H1 (cell line): ENCODE measurements at regions of chr10 and their contacts with region 1.

Region 1: DNA sequence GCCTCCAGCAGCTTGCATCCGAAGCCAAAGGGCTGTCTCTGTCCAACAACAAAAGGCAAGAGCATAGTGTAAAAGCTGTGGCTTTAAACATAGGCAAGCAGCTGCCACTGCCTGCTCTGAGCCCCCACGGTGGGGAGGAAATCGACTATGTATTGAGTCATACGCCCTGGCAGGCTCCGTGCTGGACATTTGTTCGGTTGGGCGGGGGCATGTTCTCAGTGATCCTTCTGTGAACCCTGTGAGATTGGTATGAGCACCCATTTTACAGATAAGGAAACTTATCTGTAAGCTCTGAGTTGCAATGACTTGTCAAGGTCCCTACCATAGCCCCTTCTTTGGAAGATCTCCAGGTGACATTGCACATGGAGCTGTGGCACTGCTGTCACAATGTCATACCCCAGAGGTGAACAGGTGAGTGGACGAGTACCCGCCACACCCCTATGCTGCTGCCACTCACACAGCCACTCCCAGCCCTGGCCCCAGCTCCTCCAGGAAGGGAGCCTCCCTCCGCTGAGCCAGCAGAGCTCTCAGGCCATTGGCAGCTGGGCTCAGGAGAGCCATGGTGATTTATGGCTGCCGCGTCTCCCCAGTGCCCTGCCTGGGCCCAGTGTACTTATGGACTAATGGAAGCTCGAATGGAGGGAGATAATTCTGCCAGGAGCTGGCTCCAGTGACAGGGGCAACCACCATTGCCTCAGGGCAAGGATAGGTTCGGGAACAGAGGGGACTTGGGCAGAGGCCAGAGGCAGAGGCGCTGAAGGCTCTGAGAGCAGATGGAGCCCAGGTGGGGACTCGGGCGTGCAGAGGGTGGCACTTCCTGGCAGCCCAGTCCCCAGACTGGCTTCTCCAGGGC is 43.7 kb downstream of the UNC5B start:
- DNase-seq: no peak
- H3K4me3 ChIP-seq: no peak overlapping the region
- H3K27ac ChIP-seq: no peak overlapping the region
- H3K4me1 ChIP-seq: peaks cover 17 to 41% (median 33%) of the 10 kb centered on the region in 4 experiments
- H3K27me3 ChIP-seq: no peaks in the 10 kb centered on the region
- CTCF ChIP-seq: no peak
- EP300 ChIP-seq: no peak
- POLR2A ChIP-seq: no peak
- RAD21 ChIP-seq: no peak

Region 2: DNA sequence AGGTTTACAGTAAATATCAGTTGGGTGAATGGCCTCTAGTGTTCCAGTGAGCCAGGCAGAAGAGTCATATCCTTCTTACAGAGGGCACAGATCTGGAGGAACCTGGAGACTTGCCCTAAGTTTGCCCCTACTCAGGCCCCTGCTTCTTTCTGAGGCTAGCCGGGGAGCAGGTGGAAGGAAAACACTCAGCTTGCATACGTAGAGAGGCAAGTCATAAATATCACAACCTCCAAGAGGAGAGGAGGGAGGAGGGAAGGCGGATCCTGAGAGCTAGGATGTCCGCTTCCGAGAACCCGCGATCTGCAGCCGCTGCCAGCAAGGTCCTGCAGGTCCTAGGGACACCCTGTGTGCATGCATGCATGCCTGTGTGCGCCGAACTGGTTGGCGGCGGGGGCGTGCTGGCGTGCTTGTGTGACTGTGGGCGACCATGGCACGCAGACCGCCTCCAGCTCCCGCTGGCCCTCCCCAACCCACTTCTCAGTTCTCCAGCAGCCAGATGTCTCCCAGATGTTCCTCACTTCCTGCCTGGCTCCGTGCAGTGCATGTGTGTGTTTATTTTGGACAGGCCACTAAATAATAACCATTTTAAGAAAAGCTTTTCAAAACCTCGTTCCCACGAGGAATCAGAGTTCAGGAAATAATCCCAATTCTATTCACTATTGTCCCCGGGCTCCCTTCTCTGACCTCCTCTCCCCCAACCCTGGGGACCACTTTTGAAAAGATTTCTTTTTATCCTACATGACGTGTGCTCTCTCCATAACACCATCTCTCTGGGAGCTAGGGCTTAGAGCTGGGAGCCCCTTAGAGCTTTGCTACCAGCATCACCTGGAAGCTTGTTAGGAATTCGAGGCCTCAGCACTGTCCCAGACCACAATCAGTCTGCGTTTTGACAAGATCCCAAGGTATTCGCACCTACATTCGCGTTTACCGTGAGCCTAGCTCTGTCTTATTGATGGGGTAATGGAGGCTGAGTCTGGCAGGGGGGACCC is 11.3 kb before region 1 on chr10:
- CTCF ChIA-PET with region 1: interaction called, 21 read pairs
- POLR2A ChIA-PET with region 1: interaction called, 4 read pairs
- DNase-seq: no peak
- H3K4me3 ChIP-seq: no peak overlapping the region
- H3K27ac ChIP-seq: no peak overlapping the region
- H3K4me1 ChIP-seq: peaks cover 0 to 1% (median 0%) of the 10 kb centered on the region in 4 experiments; a peak in 2 of 7 replicates
- H3K27me3 ChIP-seq: no peaks in the 10 kb centered on the region; a peak in 1 of 7 replicates
- CTCF ChIP-seq: no peak
- EP300 ChIP-seq: no peak
- POLR2A ChIP-seq: no peak
- RAD21 ChIP-seq: no peak

Region 3: DNA sequence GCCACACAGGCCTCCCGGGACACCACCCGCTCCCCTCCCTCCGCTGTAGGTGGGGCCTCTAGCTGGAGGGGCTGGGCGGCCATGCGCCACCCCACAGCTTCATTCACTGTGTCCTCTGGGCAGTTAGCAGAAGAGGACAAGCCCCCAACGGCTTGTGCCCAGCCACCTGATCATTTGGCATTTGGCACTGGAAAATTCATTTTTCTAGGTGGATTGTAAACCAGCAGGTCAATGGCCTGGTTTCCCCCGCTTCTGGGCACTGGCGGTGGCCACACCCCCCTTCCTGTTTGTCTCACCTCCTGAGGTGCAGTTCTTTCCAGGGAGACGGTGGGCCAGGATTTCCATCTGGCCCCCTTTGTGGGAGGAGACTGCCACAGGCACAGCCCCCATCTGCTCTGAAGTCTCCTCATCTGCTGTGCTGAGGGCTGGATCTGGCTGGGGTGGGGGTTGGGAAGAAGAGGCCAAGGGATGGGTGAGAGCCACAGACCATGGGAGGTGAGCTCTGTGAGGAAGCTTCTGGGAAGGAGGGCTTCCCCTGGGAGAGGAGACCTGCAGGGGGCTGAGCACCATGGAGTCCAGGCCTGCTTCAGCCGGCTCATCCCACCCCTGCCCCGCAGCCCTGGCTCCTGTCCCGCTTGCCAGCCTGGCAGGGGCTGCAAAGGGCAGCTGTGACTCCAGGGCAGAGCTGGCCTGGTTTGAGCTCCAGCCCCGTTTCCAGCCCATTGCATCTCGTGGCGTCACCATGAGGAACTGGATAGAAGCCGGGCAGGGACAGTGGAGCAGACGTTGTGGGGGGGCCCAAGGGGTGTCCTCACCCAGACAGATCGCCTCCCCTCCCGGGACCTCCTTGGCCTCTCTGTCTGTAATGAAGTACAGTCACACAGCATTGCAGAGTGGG is 22.9 kb after region 1 on chr10:
- CTCF ChIA-PET with region 1: interaction called, 13 read pairs
- POLR2A ChIA-PET with region 1: no interaction called
- DNase-seq: no peak
- H3K4me3 ChIP-seq: no peak overlapping the region
- H3K27ac ChIP-seq: no peak overlapping the region; the same call in 1 of the 2 replicates
- H3K4me1 ChIP-seq: peaks cover 0 to 25% (median 16%) of the 10 kb centered on the region in 4 experiments; a peak in 6 of 7 replicates
- H3K27me3 ChIP-seq: no peaks in the 10 kb centered on the region
- CTCF ChIP-seq: no peak
- EP300 ChIP-seq: no peak
- POLR2A ChIP-seq: no peak
- RAD21 ChIP-seq: no peak